Dorsolateral prefrontal cortex (tissue), 120 donors: ENCODE measurements at regions of chr1 and their contacts with region 1.

Region 1: GRCh38 chr1:166875734-166876539 is at the start of gene TADA1:
- DNase-seq: peak; percentile 96 to 100 (median 98)
- H3K4me3 ChIP-seq: peak within 1 kb of the TSS; percentile 66 to 98 (median 91)
- H3K27ac ChIP-seq: peak within 1 kb of the TSS in 57 of 59 donors; percentile 54 to 95 (median 88)
- H3K27me3 ChIP-seq: no peaks in the 10 kb centered on the region
- CTCF ChIP-seq: peak in 47 of 56 donors; percentile 24 to 74 (median 54)
- total RNA-seq, gene TADA1: 11.7 to 26.4 (median 18.3) TPM

Region 2: DNA sequence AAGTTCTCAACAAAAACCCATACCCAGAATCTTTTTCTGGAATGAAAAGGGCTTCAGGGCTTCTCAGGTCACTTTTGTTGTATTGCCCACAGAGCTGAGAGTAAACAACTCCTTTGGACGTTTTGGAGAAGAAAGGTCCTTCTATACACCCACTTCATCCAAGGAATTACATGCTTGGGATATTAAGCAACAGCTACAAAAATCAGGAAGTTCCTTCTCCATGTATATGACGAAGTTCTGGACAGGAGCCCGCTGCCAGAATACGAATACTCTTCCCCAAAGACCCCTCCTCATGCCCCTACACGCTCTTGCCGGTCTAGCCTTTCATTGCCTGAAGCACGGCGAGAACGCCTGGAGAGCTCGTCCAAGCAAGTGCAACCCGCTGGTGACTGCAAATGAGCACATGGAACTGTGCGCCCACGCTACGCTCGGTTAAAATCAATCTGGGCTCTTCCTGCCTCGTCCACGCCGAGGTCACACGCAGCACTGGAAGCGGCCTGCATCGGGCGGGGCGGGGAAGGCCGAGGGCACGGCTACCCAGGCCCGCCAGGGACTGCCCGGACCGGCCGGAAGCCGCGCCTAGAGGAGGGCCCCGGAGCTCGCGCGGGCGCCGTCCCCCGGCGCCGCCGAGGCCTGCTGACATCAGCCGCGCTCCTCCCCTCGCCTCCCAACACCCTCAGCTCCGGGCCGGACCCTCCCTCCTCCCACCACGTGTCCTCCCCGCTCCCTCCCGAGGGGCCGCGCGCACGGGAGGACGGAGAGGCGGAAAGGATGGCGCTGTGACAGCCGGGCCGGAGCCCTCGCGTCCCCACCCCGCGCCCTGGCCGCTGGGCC is 37.0 kb before region 1 on chr1 and contains the start of gene POGK:
- intact Hi-C with region 1: loop called (anchors 1 kb)
- DNase-seq: peak; percentile 84 to 96 (median 91)
- H3K4me3 ChIP-seq: peak within 1 kb of the TSS; percentile 58 to 88 (median 76)
- H3K27ac ChIP-seq: peak within 1 kb of the TSS; percentile 75 to 99 (median 96)
- H3K27me3 ChIP-seq: no peaks in the 10 kb centered on the region
- CTCF ChIP-seq: peak in 34 of 56 donors; percentile 17 to 60 (median 34)
- total RNA-seq, gene POGK: 37.1 to 98.5 (median 49.7) TPM

Region 3: DNA sequence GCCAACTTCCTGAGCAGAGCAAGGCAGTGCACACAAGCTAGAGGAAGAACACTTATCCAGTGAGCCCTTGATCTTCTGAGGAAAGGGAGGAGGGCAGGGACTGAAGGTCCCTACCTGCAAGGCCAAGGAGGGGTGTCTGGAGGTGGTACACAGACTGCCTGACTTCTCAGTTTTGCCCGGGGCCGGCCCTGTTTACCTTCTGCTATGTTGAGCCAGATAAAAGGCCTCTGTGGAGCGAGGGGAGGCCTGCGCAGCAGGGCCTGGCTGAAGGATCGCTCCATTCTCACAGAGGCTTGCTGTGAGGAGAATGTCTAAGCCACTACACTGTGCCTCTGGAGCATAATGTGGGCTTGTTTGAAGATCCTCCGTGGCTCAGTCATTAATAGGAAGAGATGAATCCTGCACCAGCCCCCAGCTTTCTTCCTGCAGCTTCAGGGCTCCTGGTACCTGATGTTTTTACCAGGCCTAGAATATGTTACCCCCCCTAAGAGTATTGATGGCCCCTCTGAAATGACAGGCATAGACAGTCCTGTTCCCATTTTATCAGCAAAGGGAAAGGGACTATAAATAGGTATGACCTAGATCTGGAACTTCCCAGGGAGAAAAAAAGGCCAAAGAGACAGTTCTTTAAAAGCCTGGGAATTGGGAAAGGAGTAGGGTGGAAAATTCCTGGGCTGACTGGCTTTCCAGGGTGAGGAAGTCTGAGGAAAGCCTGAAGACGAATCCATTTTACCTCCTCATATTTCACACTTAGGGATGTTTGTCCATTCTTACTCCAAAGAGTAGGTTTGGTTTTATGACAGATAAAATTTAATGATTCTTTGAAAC is 32.0 kb before region 1 on chr1:
- intact Hi-C with region 1: loop called (anchors 1 kb)
- DNase-seq: peak in 7 of 10 donors; percentile 34 to 63 (median 52)
- H3K4me3 ChIP-seq: peak overlapping the region in 35 of 59 donors; percentile 0 to 86 (median 14)
- H3K27ac ChIP-seq: peak overlapping the region; percentile 60 to 98 (median 90)
- H3K27me3 ChIP-seq: no peaks in the 10 kb centered on the region
- CTCF ChIP-seq: no peak

Region 4: DNA sequence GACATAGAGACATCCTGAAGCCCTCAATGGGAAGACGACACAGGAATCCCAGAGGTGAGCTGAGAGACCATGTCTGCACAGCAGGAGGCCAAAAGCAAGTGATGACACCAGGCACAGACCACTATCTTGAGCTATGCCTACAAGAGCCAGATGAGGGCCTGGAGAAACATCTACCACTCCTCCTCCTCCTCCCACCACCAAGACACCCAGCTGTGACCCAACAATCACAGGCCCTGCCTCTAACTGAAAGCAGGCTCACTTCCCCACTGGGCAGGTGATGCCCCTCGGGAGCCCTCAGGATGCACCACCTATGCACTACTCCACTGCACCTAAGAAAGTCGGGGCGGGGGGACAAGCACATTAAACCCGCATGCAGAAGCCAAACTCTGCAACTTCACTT is 16.3 kb before region 1 on chr1:
- intact Hi-C with region 1: loop called in 1 of 2 experiments (anchors 2 kb)
- DNase-seq: no peak
- H3K4me3 ChIP-seq: peak overlapping the region in 1 of 59 donors; percentile 8
- H3K27ac ChIP-seq: peak overlapping the region in 58 of 59 donors; percentile 65 to 95 (median 87)
- H3K27me3 ChIP-seq: no peaks in the 10 kb centered on the region
- CTCF ChIP-seq: no peak

Region 5: GRCh38 chr1:167033646-167034045 is 157.7 kb after region 1 on chr1:
- intact Hi-C with region 1: no loop called
- DNase-seq: no peak
- H3K4me3 ChIP-seq: no peak overlapping the region
- H3K27ac ChIP-seq: no peak overlapping the region
- H3K27me3 ChIP-seq: no peaks in the 10 kb centered on the region
- CTCF ChIP-seq: no peak